ENCODE measurements at regions of chr10 and their contacts with region 1.

Region 1: GRCh38 chr10:72862957-72863356 is 30.6 kb upstream of the OIT3 start:
- DNase-seq: no peak
- H3K4me3 ChIP-seq: no peak overlapping the region
- CTCF ChIP-seq: no peak

Region 2: GRCh38 chr10:72875250-72876055 is 12.5 kb after region 1 on chr10:
- CTCF ChIA-PET with region 1: interaction called, 10 read pairs
- POLR2A ChIA-PET with region 1: no interaction called
- DNase-seq: no peak
- H3K4me3 ChIP-seq: no peak overlapping the region
- CTCF ChIP-seq: peak; percentile 24